Posterior vena cava (tissue), 2 donors: ENCODE measurements at regions of chr1 and their contacts with region 1.

Region 1: DNA sequence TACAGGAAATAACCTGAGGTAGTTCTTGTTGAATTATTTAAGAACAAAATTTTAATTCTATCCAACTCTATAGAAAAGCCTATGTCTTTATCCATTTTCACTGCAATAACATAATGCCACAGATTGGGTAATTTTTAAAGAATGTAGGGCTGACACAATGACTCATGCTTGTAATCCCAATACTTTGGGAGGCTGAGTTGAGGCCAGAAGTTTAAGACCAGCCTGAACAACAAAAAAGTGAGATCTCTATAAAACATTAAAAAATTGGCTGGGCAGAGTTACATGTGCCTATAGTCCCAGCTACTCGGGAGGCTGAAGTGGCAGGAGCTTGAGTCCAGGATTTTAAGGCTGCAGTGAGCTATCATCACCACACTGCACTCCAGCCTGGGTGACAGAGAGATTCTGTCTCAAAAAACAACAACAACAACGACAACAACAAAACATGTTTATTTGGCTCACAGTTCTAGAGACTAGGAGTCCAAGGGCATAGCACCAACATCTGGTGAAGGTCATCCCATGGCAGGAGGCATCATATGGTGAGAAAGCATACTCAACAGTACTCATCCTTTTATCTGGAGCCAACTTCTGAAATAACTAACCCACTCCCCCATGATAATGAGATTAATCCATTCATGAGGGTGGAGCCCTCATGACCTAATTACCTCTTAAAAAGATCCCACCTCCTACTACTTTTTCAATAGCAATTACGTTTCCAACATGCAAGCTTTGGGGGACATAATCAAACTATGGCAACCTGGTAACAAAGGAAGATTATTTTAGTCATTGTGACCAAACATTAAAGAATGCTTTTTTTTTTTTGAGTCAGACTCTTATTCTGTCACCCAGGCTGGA is 59.6 kb downstream of the ABL2 start:
- DNase-seq: no peak

Region 2: GRCh38 chr1:179129702-179130473 is 40.0 kb before region 1 on chr1:
- intact Hi-C with region 1: no loop called
- DNase-seq: no peak

Region 3: DNA sequence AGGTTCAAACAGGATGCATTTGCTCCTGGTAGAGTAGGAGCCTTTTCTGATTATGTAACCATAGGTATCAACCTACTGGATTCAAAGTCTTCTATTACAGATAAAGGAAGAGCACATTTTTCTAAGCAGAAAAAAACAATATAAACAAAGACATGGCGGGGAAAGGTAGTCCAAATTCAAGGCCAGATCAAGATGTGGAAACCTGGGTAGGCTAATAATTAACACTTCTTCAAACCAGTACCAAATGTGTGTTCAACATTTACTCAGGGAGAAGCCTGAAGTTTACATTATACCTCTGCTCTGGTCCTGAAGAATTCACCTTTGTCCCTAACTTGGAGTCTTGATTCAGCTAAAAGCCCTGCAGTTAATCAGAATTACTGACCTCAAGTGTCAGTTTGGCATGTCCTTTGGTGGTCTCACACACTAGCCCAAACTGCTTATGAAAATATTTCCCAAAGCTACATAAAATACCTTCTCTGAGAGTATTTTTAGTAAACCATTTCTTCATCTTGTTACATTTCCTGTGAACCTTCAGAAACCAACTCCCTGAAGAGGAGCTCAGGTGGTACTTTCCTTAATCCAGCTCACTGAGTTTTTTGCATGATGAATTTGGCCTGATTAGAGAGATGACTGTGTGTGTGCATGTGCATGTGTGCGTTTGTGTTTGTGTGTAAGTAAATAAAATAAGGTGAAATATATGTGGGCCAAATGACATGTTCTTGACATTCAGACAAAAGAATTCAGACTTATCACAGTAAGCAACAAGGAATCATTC is 17.7 kb before region 1 on chr1:
- intact Hi-C with region 1: loop called in 1 of 2 experiments (anchors 2 kb)
- DNase-seq: no peak

Region 4: GRCh38 chr1:179190861-179191260 is 21.0 kb after region 1 on chr1:
- intact Hi-C with region 1: loop called in 1 of 2 experiments (anchors 1 kb)
- DNase-seq: no peak